ENCODE measurements at regions of chr15 and their contacts with region 1.

Region 1: GRCh38 chr15:34223904-34224596 is 766 bp upstream of the EMC4 start:
- DNase-seq: peak in 2 of 9 experiments; percentile 11 to 34
- ATAC-seq: no peak
- H3K4me3 ChIP-seq: peak overlapping the region; percentile 53 to 86
- H3K4me3 Mint-ChIP-seq: peak overlapping the region; percentile 93
- H3K27ac ChIP-seq: peak overlapping the region; percentile 75 to 93
- H3K27ac Mint-ChIP-seq: peak overlapping the region; percentile 99
- H3K4me1 ChIP-seq: peaks cover 15% of the 10 kb centered on the region
- H3K4me1 Mint-ChIP-seq: peaks cover 29% of the 10 kb centered on the region
- H3K27me3 ChIP-seq: no peaks in the 10 kb centered on the region
- H3K27me3 Mint-ChIP-seq: no peaks in the 10 kb centered on the region
- CTCF ChIP-seq: no peak

Region 2: DNA sequence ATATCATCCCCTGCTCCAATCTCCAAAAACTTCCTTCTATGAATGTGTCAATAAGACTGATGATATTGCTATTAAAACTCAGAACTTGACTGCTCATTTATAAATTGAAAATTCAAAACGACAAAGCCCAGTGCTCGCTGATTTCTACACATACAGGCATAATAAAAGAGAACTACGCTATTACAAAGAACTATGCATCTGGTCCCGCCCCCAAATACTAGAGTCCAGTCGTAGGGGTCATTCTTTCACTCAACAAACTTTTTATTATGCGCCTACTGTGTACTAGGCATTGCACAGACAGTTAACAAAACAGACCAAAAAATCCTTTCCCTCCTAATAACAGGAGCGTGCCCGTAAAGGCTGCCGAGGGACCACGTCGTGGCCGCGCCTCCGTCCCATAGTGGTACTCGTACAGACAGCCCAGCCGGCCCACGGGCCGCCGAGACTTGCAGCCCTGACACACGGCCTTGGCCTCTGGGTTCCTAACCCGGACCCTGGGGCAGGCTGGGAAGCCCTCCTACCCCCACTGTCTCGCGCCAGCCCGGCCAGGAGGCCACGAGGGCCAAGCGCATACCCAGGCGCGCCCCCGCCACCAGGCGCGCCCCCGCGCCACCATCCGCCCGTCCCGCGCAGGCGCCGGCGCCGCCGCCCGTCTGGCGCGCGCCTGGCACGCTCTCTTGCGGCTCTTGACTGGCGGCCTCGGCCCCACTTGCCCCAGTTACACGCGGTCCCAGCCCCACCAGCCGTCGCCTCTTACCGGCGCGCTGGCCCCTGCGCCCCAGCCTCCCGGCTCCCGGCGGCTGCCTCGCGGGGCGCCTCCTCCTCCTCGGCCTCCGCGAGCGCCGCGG is 185.8 kb before region 1 on chr15:
- CTCF ChIA-PET with region 1: no interaction called
- POLR2A ChIA-PET with region 1: interaction called, 3 read pairs
- intact Hi-C with region 1: loop called in 1 of 2 experiments (anchors 1 kb)
- DNase-seq: peak; percentile 44 to 89 (median 73)
- ATAC-seq: peak; percentile 84
- H3K4me3 ChIP-seq: peak overlapping the region; percentile 78 to 97
- H3K4me3 Mint-ChIP-seq: peak overlapping the region; percentile 94
- H3K27ac ChIP-seq: peak overlapping the region; percentile 75 to 88
- H3K27ac Mint-ChIP-seq: peak overlapping the region; percentile 94
- H3K4me1 ChIP-seq: peaks cover 19% of the 10 kb centered on the region
- H3K4me1 Mint-ChIP-seq: peaks cover 20% of the 10 kb centered on the region
- H3K27me3 ChIP-seq: no peaks in the 10 kb centered on the region
- H3K27me3 Mint-ChIP-seq: no peaks in the 10 kb centered on the region
- CTCF ChIP-seq: no peak

Region 3: DNA sequence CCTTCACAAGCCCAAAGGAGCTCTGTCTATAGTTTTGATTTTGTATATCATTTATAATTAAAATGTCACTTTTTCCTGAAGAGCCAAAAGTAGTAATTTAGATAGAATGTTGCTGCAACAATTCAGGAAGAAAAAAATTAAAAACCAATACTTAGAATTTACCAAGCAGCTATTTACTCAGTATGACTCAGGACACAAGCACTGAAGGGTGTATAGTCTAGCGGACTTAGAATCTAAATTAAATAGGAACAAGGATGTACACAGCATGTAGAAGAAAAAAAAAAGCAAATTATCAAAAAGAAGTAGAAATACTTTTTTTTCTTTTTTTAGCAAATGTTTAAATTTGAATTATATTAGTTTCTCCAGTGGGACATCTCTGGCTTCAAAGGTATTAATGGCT is 90.5 kb before region 1 on chr15:
- CTCF ChIA-PET with region 1: no interaction called
- POLR2A ChIA-PET with region 1: no interaction called
- intact Hi-C with region 1: no loop called
- DNase-seq: no peak
- ATAC-seq: no peak
- H3K4me3 ChIP-seq: no peak overlapping the region
- H3K4me3 Mint-ChIP-seq: no peak overlapping the region
- H3K27ac ChIP-seq: no peak overlapping the region
- H3K27ac Mint-ChIP-seq: no peak overlapping the region
- H3K4me1 ChIP-seq: no peaks in the 10 kb centered on the region
- H3K4me1 Mint-ChIP-seq: no peaks in the 10 kb centered on the region
- H3K27me3 ChIP-seq: no peaks in the 10 kb centered on the region
- H3K27me3 Mint-ChIP-seq: no peaks in the 10 kb centered on the region
- CTCF ChIP-seq: no peak

Region 4: DNA sequence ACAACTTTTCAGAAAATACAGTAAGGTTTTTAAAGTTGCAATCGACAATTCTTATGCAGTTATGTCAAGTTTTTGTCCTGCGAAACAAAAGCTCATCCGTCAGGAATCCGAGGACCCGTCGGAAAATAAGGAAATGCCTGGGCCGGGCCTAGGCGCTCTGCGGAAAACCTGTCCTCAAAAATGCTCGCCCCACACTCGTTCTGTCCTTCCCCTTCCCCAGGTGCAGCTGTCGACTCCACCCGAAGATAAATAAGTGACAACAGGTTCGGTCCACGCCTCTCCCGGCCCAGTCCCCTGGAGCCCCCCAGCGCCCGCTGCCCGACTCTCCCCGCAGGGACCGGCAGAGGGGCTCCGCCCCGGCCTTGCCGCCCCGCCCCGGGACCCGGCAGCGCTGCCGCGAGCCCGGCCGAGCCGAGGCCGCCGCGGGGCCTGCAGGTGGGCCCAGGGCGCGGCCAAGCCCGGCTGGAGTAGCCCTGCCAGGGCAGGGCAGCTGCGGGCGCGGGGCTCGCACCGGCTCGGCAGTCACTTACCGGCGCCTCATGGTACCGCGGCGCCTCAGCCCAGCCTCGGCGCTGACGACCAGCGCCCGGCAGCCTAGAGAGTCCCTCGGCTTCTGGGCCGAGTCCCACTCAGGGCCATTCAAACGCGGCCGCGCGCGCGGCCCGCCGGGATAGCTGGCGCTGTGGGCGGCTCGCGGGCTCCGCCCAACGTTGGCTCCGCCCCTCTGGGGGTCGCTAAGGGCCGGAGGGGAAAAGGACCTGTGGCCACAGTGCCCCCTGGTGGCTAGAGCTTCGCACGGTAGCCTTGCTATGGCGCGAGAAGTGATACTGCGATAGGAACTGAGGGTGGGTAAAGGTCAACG is 14.4 kb before region 1 on chr15 and contains the start of gene KATNBL1:
- CTCF ChIA-PET with region 1: interaction called, 14 read pairs
- POLR2A ChIA-PET with region 1: no interaction called
- intact Hi-C with region 1: loop called (anchors 1 kb)
- DNase-seq: peak; percentile 88 to 99 (median 97)
- ATAC-seq: peak; percentile 94
- H3K4me3 ChIP-seq: peak within 1 kb of the TSS; percentile 49 to 71
- H3K4me3 Mint-ChIP-seq: peak within 1 kb of the TSS; percentile 92
- H3K27ac ChIP-seq: peak within 1 kb of the TSS; percentile 38 to 62
- H3K27ac Mint-ChIP-seq: peak within 1 kb of the TSS; percentile 92
- H3K4me1 ChIP-seq: peaks cover 14% of the 10 kb centered on the region
- H3K4me1 Mint-ChIP-seq: peaks cover 26% of the 10 kb centered on the region
- H3K27me3 ChIP-seq: no peaks in the 10 kb centered on the region
- H3K27me3 Mint-ChIP-seq: no peaks in the 10 kb centered on the region
- CTCF ChIP-seq: peak; percentile 69
- total RNA-seq, gene KATNBL1: 9.3 to 10.0 TPM

Region 5: GRCh38 chr15:34337557-34338306 is 113.7 kb after region 1 on chr15 and contains the start of gene SLC12A6:
- CTCF ChIA-PET with region 1: no interaction called
- POLR2A ChIA-PET with region 1: no interaction called
- intact Hi-C with region 1: loop called (anchors 1 to 2 kb)
- DNase-seq: peak; percentile 81 to 95 (median 89)
- ATAC-seq: peak; percentile 84
- H3K4me3 ChIP-seq: peak within 1 kb of the TSS; percentile 81 to 97
- H3K4me3 Mint-ChIP-seq: peak within 1 kb of the TSS; percentile 98
- H3K27ac ChIP-seq: peak within 1 kb of the TSS; percentile 75 to 80
- H3K27ac Mint-ChIP-seq: peak within 1 kb of the TSS; percentile 97
- H3K4me1 ChIP-seq: peaks cover 55% of the 10 kb centered on the region
- H3K4me1 Mint-ChIP-seq: peaks cover 61% of the 10 kb centered on the region
- H3K27me3 ChIP-seq: no peaks in the 10 kb centered on the region
- H3K27me3 Mint-ChIP-seq: no peaks in the 10 kb centered on the region
- CTCF ChIP-seq: no peak
- total RNA-seq, gene SLC12A6: 55.7 to 60.8 TPM

Region 6: DNA sequence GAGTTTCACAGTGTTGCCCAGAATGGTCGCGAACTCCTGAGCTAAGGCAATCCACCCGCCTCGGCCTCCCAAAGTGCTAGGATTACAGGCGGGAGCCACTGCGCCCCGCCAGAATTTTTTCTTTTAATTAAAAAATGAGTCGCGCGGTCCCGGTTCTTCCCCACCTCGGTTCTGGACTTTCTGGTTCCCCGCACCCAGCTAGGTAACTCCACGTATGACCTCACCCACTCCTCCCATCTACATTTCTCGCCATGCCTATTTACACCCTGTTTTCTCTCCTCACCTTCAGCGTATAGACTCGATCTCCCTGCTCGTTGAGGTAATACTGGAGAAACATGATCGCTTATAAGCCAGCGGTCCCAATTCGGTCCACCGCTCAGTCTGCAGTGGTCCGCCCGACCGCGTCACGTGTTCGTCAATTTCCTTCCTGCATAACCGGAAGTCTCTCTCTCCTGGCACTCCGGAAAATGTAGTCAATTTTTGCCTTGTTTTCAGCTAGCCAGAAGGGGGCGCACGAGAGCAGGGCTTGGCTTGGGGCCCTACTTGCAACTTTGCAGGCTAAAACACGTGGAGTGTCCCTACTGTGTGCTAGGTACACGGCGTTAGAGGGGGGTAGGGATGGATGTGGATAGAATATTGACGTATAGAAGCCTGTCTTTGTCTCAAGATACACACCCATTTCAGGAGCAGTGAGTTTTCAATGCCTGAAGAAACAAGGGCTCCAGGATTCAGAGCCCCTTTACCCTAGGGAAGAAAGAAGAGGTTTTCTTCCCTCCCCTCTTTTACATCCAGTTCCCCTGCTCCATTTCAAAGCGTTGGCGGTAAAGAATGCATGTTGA is 118.9 kb after region 1 on chr15 and contains the starts of genes NOP10 and NUTM1:
- CTCF ChIA-PET with region 1: no interaction called
- POLR2A ChIA-PET with region 1: no interaction called
- intact Hi-C with region 1: loop called in 1 of 2 experiments (anchors 2 kb)
- DNase-seq: peak; percentile 87 to 96 (median 93)
- ATAC-seq: peak; percentile 83
- H3K4me3 ChIP-seq: peak within 1 kb of the TSS; percentile 88 to 90
- H3K4me3 Mint-ChIP-seq: no peak within 1 kb of the TSS
- H3K27ac ChIP-seq: peak within 1 kb of the TSS; percentile 82 to 90
- H3K27ac Mint-ChIP-seq: peak within 1 kb of the TSS; percentile 85
- H3K4me1 ChIP-seq: peaks cover 20% of the 10 kb centered on the region
- H3K4me1 Mint-ChIP-seq: peaks cover 24% of the 10 kb centered on the region
- H3K27me3 ChIP-seq: no peaks in the 10 kb centered on the region
- H3K27me3 Mint-ChIP-seq: no peaks in the 10 kb centered on the region
- CTCF ChIP-seq: peak; percentile 90
- total RNA-seq, gene NOP10: 36.6 to 40.1 TPM
- total RNA-seq, gene NUTM1: not detected

Region 7: GRCh38 chr15:34969340-34970097 is 745.5 kb after region 1 on chr15 and contains the start of gene AQR:
- CTCF ChIA-PET with region 1: no interaction called
- POLR2A ChIA-PET with region 1: interaction called, 3 read pairs
- intact Hi-C with region 1: loop called in 1 of 2 experiments (anchors 5 kb)
- DNase-seq: peak; percentile 81 to 97 (median 91)
- ATAC-seq: peak; percentile 98
- H3K4me3 ChIP-seq: peak within 1 kb of the TSS; percentile 65 to 73
- H3K4me3 Mint-ChIP-seq: peak within 1 kb of the TSS; percentile 98
- H3K27ac ChIP-seq: peak within 1 kb of the TSS; percentile 62 to 72
- H3K27ac Mint-ChIP-seq: peak within 1 kb of the TSS; percentile 92
- H3K4me1 ChIP-seq: peaks cover 27% of the 10 kb centered on the region
- H3K4me1 Mint-ChIP-seq: peaks cover 50% of the 10 kb centered on the region
- H3K27me3 ChIP-seq: no peaks in the 10 kb centered on the region
- H3K27me3 Mint-ChIP-seq: no peaks in the 10 kb centered on the region
- CTCF ChIP-seq: peak; percentile 73
- total RNA-seq, gene AQR: 31.3 to 37.1 TPM

Region 8: DNA sequence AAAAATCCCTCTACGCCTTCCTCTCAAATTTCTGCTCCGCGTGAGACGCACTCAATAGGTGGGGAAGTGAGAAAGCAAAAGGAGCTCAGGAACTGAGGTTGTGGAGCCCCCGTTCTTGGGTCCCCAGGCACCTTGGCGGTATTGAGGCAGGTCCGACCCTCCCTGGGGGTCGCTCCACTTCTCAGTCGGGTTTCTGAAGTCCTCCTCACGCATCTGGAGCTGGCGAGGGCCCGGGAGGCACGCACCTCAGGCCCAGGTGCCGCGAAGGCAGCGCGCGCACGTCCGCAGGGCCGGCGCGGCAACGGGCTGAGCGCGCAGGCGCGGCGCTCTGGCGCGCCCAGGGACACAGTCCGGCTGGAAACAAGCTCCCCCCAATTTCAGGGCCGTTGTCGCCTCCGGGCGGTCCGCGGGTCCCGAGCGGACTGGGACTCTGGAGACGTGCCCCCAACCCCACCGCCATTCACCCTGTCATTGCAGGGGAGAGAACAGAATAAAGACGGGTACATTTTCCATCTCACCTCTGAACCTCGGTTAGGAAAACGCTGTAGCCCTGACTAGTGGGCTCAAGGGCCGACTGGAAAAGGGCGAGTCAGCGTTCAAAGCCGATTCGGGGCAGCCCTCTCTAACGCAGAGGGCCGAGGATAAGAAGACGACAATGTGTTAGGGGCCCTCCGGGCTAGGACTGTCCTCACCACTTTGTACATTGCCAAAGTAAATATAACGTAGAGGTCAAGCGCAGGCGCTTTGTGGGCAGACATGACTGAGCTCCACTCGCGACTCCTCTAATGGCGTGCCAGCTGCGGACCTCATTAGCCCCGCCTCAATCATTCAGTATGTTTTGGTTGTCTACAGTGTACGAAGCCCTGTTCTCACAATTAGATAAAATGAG is 764.2 kb after region 1 on chr15 and contains the start of gene ZNF770:
- CTCF ChIA-PET with region 1: no interaction called
- POLR2A ChIA-PET with region 1: no interaction called
- intact Hi-C with region 1: loop called (anchors 2 kb)
- DNase-seq: peak; percentile 72 to 93 (median 81)
- ATAC-seq: peak; percentile 89
- H3K4me3 ChIP-seq: peak within 1 kb of the TSS; percentile 99 to 100
- H3K4me3 Mint-ChIP-seq: peak within 1 kb of the TSS; percentile 99
- H3K27ac ChIP-seq: peak within 1 kb of the TSS; percentile 95 to 96
- H3K27ac Mint-ChIP-seq: peak within 1 kb of the TSS; percentile 99
- H3K4me1 ChIP-seq: peaks cover 24% of the 10 kb centered on the region
- H3K4me1 Mint-ChIP-seq: peaks cover 45% of the 10 kb centered on the region
- H3K27me3 ChIP-seq: no peaks in the 10 kb centered on the region
- H3K27me3 Mint-ChIP-seq: peaks cover 1% of the 10 kb centered on the region
- CTCF ChIP-seq: no peak
- total RNA-seq, gene ZNF770: 32.9 to 37.7 TPM